ENCODE measurements at regions of chr6 and their contacts with region 1.

Region 1: DNA sequence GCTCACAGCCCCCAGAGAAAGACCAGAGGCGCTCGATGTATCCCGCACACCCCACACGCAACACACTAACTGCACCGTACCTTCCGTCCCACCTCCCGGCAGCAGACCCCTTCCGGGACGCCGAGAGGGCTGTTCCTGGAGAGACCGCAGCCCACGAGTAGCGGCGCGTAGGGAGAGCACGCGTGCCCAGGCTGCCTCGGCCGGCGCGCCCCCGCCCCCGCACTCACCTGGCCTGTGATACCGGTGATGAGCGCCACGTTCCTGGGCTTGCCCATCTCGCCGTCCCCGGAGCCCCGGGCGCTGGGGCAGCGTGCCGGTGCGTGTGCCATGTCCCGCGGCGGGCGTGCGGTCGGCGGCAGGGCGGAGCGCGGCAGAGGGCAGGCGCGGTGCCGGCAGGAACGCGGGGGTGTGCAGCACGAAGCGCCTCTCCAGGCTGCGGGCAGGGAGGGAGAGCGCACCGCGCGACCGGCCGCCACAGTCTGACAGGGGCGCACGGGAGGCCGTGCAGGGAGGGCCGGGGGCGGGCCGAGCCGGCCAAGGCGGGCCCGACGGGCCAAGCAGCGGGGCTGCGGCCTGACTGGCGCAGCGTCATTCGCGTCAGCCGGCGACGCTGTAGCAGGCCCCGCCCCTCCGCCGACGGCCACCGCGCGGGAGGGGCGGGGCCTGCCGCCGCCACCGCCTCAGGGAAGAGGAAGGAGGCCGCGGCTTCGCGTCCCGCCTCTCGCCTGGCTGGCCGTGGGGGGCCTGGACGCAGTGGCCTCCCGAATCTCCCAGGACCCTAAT is at the start of gene GMDS:
- DNase-seq: peak; percentile 70 to 94 (median 80)
- ATAC-seq: peak; percentile 93
- H3K4me3 ChIP-seq: peak within 1 kb of the TSS; percentile 86 to 90
- H3K4me3 Mint-ChIP-seq: peak within 1 kb of the TSS; percentile 91
- H3K27ac ChIP-seq: peak within 1 kb of the TSS; percentile 81 to 86
- H3K27ac Mint-ChIP-seq: peak within 1 kb of the TSS; percentile 94
- H3K4me1 ChIP-seq: peaks cover 24% of the 10 kb centered on the region
- H3K4me1 Mint-ChIP-seq: peaks cover 61% of the 10 kb centered on the region
- H3K27me3 ChIP-seq: no peaks in the 10 kb centered on the region
- H3K27me3 Mint-ChIP-seq: no peaks in the 10 kb centered on the region
- CTCF ChIP-seq: no peak
- total RNA-seq, gene GMDS: 14.1 to 18.5 TPM

Region 2: DNA sequence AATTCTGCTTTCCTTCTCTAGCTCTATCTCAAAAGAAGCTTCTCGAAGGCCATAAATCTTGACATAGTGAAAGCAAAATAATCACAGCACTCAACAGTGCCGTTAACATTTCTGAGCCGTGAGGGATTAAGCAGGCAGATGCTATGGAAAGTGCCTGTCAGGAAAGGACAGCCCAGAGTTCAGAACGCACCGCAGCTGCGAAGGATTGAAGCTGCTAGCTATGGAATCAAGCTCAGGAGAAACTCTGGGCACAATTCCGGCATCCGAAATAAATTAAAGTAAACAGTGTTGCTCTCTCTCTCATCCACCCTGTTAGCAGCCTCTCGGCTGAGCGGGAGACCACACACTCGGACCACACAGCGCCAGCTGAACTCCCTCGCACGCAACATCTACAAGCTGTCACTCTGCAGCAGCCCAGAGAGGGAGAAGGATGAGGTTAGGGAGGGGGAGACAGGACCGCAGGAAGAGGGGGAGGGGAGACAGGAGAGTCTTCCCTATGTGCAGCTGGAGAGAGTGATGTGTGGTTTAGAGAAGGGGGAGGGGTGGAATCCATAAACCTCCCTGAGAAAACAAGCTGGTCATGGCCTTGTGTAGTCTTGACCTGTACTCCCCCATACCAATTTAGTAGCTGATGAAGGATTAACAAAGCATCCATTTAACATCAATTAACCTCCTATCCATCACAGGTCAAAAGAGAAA is 1561.4 kb before region 1 on chr6:
- CTCF ChIA-PET with region 1: no interaction called
- POLR2A ChIA-PET with region 1: no interaction called
- intact Hi-C with region 1: loop called in 1 of 2 experiments (anchors 10 kb)
- DNase-seq: no peak
- ATAC-seq: no peak
- H3K4me3 ChIP-seq: no peak overlapping the region
- H3K4me3 Mint-ChIP-seq: peak overlapping the region; percentile 61
- H3K27ac ChIP-seq: no peak overlapping the region
- H3K27ac Mint-ChIP-seq: no peak overlapping the region
- H3K4me1 ChIP-seq: peaks cover 28% of the 10 kb centered on the region
- H3K4me1 Mint-ChIP-seq: peaks cover 52% of the 10 kb centered on the region
- H3K27me3 ChIP-seq: no peaks in the 10 kb centered on the region
- H3K27me3 Mint-ChIP-seq: no peaks in the 10 kb centered on the region
- CTCF ChIP-seq: no peak

Region 3: GRCh38 chr6:2221726-2222274 is 23.5 kb before region 1 on chr6:
- CTCF ChIA-PET with region 1: no interaction called
- POLR2A ChIA-PET with region 1: interaction called, 4 read pairs
- intact Hi-C with region 1: loop called in 1 of 2 experiments (anchors 2 kb)
- DNase-seq: peak in 2 of 9 experiments; percentile 10 to 47
- ATAC-seq: no peak
- H3K4me3 ChIP-seq: peak overlapping the region; percentile 40 to 68
- H3K4me3 Mint-ChIP-seq: peak overlapping the region; percentile 88
- H3K27ac ChIP-seq: peak overlapping the region; percentile 43 to 77
- H3K27ac Mint-ChIP-seq: peak overlapping the region; percentile 86
- H3K4me1 ChIP-seq: peaks cover 6% of the 10 kb centered on the region
- H3K4me1 Mint-ChIP-seq: peaks cover 33% of the 10 kb centered on the region
- H3K27me3 ChIP-seq: no peaks in the 10 kb centered on the region
- H3K27me3 Mint-ChIP-seq: no peaks in the 10 kb centered on the region
- CTCF ChIP-seq: no peak

Measured in CD8-positive, alpha-beta T cell (primary cell).